MCF 10A (cell line): ENCODE measurements at regions of chr20 and their contacts with region 1.

Region 1: DNA sequence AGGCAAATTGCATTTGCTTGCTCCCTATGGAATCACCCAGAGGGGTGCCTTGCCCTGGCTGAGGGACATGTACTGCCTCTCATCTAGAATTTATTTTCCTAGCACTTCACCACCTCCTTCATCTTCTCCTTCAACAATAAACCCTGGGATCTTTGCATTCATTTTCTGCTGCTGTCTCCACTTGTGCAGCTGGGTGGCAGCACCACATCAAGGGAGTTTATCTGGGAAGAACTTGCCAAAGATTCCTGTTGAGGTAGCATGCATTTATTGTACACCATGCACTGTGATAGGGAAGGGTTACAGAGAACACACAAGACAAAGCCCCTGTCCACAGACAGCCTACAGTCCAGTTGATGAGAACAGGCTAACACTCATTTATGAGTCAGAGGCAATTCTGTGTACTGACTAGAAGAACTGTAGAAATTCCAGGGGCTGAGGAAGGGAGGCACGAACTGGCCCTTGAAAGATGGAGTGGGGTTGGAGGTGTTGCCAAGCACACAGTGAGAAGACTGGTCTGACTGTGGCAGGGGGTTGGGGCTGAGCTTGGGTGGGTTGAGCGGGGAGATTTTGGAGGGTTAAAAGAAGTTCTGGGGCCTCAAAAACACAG is 17.5 kb downstream of the C20orf173 start:
- DNase-seq: peak; percentile 51
- H3K4me3 Mint-ChIP-seq: no peak overlapping the region
- H3K27ac Mint-ChIP-seq: no peak overlapping the region
- H3K4me1 Mint-ChIP-seq: peaks cover 13% of the 10 kb centered on the region
- H3K27me3 Mint-ChIP-seq: no peaks in the 10 kb centered on the region
- CTCF ChIP-seq: peak; percentile 67

Region 2: DNA sequence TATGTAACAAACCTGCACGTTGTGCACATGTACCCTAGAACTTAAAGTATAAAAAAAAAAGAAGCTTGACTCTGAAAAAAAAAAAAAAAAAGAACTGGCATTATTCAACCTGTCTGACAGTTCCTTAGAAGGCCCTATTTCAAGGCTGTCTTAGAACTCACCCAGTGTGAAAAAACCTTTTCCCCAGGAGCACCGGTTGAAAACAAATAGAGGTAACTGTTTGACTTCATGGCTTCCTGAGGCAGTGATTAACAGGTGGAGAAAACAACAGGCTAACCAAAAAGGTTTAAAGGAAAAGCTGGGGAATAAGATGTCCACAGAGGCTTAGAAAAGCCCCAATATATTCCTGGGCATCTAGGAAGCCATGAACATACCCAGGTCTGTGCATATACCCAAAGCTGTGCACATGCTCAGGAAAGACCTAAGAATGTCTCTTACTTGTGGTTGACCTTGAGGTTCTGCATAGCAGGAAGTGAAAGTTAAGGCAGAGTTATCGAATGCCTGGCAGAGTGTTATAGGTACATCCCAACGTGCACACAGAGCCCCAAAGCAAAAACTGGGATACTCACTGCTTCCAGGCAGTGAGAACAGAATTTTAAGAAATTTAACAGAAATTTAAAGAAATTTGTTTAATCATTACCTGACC is 107.2 kb before region 1 on chr20:
- CTCF ChIA-PET with region 1: no interaction called
- POLR2A ChIA-PET with region 1: no interaction called
- intact Hi-C with region 1: no loop called
- DNase-seq: no peak
- H3K4me3 Mint-ChIP-seq: no peak overlapping the region
- H3K27ac Mint-ChIP-seq: no peak overlapping the region
- H3K4me1 Mint-ChIP-seq: no peaks in the 10 kb centered on the region
- H3K27me3 Mint-ChIP-seq: no peaks in the 10 kb centered on the region
- CTCF ChIP-seq: no peak

Region 3: GRCh38 chr20:35497780-35498189 is 14.1 kb before region 1 on chr20:
- CTCF ChIA-PET with region 1: interaction called, 17 read pairs
- POLR2A ChIA-PET with region 1: interaction called, 5 read pairs
- intact Hi-C with region 1: no loop called
- DNase-seq: no peak
- H3K4me3 Mint-ChIP-seq: no peak overlapping the region
- H3K27ac Mint-ChIP-seq: no peak overlapping the region
- H3K4me1 Mint-ChIP-seq: no peaks in the 10 kb centered on the region
- H3K27me3 Mint-ChIP-seq: no peaks in the 10 kb centered on the region
- CTCF ChIP-seq: no peak